ENCODE measurements at regions of chr18 and their contacts with region 1.

Region 1: DNA sequence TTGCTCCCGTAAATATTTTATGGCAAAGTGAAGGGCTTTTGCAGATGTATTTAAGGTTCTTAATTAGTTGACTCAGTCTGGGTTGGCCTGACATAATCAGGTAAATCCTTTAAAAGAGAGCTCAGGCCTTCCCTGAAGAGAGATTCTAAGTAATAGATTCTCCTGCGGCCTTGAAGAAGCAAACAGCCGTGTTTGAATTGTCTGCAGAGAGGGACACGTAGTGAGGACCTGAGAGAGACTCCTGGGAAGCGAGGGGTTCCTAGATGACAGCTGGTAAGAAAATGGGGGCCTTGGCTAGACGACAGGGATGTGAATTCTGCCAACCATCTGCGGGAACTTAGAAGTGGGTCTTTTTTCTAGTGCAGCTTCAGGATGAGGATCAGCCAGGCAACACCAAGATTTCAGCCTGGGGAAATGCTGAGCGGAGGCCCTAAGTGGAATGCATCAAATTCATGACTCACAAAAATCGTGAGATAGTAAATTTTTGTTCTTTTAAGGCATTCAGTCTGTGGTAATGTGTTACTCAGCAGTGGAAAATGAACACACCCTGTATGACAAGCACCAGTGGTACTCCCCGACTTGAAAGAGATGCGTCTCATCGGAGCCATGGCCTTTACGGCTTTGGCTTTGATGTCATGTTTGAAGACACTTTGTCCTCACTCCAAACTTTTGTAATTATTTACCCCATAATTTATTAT is 62.1 kb upstream of the SMIM21 start:
- DNase-seq: peak; percentile 98
- ATAC-seq: peak; percentile 99
- H3K4me3 ChIP-seq: no peak overlapping the region
- H3K27ac ChIP-seq: peak overlapping the region; percentile 99
- H3K4me1 ChIP-seq: peaks cover 9% of the 10 kb centered on the region
- H3K27me3 ChIP-seq: no peaks in the 10 kb centered on the region
- CTCF ChIP-seq: no peak
- POLR2A ChIP-seq: no peak
- RAD21 ChIP-seq: 0 out of 2 replicates have a peak, but pooled peaks have one; percentile 17

Region 2: GRCh38 chr18:76252880-76253279 is 763.2 kb after region 1 on chr18:
- CTCF ChIA-PET with region 1: no interaction called
- POLR2A ChIA-PET with region 1: no interaction called
- dilution Hi-C with region 1: no loop called
- in situ Hi-C with region 1: no loop called
- intact Hi-C with region 1: loop called (anchors 10 kb)
- DNase-seq: peak; percentile 6
- ATAC-seq: no peak
- H3K4me3 ChIP-seq: no peak overlapping the region
- H3K27ac ChIP-seq: no peak overlapping the region
- H3K4me1 ChIP-seq: no peaks in the 10 kb centered on the region
- H3K27me3 ChIP-seq: peaks cover 6% of the 10 kb centered on the region
- CTCF ChIP-seq: peak; percentile 43; the same call in 1 of the 2 replicates
- POLR2A ChIP-seq: no peak
- RAD21 ChIP-seq: peak; percentile 36